Sciatic nerve (tissue), 2 donors: ENCODE measurements at regions of chr16 and their contacts with region 1.

Region 1: GRCh38 chr16:180938-181667 is 844 bp downstream of the HBQ1 start:
- DNase-seq: peak; percentile 82
- ATAC-seq: peak; percentile 72

Region 2: DNA sequence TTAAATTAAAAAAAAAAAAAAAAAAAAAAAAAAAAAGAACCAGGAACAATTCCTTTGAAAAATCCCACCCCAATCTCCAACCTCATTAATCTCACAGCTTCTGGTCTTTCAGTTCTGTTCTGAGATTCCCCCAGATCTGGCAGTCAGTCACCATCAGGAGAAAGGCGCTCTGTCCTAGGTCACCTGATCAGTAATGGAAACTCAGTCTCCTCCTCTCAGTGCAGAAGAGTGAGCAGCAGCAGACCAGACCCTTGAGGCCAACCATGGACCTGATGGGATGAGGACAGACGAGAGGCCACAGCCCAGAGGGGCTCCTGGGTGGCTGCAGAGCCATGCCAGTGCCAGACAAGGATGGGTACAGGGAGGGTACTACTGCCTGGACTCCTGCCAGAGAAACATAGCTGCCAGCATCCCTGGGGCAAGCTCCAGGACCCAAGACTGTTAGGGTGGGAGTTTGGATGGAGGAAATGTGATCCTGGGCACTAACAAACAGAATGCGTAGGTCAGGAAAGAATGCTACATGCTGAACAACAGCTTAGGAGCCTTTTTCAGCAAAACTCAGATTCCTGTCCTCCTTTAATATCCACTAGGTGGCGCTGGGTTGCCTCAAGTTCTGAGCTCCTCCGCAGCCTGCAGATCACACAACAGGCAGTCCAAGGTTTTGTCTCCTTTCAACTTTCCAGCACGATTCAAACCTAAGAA is 74.3 kb before region 1 on chr16:
- intact Hi-C with region 1: loop called (anchors 2 kb)
- DNase-seq: no peak
- ATAC-seq: peak; percentile 25